ENCODE measurements at regions of chr4 and their contacts with region 1.

Region 1: DNA sequence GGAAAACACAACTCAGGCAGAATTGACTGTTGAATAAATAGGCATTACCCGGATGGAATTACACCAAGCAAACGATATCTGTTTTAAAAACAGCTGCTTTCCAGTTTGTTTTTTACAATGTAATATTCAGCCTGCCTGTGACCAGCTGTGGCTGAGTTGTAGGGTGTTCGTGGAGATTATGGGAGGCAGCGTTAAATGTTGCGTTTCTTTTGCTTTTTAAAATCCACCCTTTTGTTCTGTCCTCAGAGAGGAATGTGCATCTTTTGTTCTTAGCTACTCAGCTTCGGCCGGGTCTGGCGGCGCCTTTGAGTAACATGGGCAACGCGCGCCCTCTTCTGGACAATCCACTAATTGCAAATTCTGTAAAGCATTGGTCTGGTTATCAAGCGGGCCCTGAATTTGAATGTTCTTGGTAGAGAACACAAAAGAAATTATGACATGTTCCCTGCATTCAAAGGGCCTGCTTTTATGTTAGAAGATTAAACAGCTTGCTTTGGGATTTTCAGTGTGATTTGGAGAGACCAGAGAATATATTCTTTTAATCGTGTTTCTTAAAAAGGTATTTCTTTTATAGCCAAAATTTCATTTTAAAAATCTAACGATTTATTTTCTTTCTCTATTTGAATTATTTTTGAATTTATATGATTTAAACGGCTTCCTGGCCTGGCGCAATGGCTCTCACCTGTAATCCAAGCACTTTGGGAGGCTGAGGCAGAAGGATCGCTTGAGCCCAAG is 76.3 kb upstream of the TRIM2 start:
- DNase-seq: peak; percentile 84
- ATAC-seq: peak; percentile 87 to 94

Region 2: GRCh38 chr4:152663203-152664066 is 464.5 kb before region 1 on chr4:
- intact Hi-C with region 1: no loop called
- DNase-seq: no peak
- ATAC-seq: no peak

Region 3: DNA sequence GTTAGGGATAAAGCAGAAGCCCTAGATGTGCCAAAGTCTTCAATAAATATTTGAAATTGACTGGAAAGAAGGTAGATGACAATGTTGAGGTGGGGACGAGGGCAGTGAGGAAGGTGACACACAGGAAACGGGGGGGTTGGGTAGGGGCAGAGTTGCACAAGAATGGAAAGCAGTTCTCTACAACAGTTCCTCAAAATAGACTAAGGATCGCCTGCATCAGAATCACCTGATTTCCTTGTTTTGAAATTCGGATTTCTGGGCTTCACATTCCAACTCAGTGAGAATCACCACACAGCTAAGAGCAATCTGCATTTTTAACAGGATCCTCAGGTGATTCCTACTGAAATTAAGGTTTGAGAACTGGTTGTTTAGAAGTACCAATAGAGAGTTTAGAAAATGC is 277.6 kb before region 1 on chr4:
- intact Hi-C with region 1: loop called in 1 of 2 experiments (anchors 5 kb)
- DNase-seq: no peak
- ATAC-seq: peak; percentile 68 to 72

Region 4: DNA sequence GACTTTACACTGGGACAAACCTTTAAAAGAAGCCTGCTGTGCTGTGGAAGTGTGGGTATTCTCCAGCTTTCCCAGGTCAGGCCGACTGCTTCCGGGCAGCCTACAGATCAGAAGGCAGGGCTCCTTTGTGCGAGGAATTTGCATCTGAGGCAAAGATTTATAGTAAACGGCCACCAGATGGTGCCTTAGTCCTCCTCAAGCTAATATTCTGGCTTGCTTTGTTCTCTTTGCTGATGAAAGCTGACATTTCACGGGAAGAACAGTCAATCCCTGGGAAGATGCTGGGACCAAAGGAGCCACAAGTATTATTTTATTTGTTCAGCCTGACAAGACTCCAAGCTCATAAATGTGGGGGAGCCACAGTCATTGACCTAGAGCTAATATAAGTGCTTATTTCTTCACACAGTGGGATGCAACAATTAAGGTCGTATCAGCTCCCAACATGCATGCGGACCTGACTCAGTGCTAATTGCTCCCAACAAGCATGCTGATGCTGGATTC is 44.4 kb before region 1 on chr4:
- intact Hi-C with region 1: loop called in 1 of 2 experiments (anchors 2 kb)
- DNase-seq: peak; percentile 49
- ATAC-seq: peak; percentile 70 to 86

Region 5: DNA sequence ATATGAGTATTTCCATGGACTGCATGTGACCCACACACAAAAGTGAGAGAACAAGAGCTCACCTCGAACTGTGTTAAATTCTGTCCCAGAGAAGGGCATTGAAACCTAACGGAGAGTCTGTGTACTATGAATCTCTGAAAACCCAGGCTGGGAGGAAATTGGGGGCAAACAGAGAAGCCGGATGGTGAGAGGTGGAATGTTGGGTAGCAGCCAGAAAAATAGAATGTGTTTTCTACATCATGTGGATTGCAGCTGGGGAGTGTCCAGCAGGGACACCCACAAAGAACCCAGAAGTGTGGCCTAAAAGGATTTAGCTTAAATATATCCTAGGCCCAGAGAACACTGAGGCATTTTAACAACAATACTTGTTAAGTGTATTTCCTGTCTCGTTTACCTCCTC is 255.2 kb after region 1 on chr4:
- intact Hi-C with region 1: no loop called
- DNase-seq: no peak
- ATAC-seq: no peak